Left ventricle myocardium inferior (tissue), 1 donor: ENCODE measurements at regions of chr6 and their contacts with region 1.

Region 1: DNA sequence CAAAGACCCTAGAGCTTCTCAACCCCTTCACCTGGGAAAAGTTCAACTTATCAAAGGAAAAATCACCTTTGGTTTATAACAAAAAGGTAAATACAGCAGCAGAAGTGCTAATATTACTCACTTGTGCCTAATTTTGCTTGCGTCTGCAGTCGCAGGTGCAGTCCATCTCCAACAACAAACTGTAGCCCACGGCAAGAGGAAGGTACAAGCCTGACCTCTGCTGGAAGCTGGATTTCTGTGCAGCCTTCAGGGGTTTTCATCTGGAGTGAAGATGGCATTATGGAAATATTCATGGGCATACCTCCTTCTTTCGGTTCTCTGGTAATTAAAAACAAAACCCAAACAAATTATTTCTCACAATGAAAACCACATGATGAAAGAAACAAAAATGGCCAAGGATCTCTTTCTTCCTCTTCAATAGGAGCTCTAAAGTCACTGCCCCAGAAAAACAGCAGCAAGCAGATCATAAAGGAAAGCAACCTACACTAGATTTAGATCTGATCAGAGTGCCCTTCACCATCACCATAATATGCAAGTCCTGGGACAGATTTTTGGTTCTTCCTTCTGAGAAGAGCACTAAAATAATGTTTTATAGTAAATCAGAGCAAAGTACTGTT is 7.8 kb downstream of the UBE3D start:
- DNase-seq: no peak
- H3K4me3 ChIP-seq: no peak overlapping the region
- H3K27ac ChIP-seq: no peak overlapping the region
- H3K4me1 ChIP-seq: peaks cover 4% of the 10 kb centered on the region
- H3K27me3 ChIP-seq: no peaks in the 10 kb centered on the region
- CTCF ChIP-seq: peak; percentile 73

Region 2: GRCh38 chr6:82251942-82252341 is 805.9 kb before region 1 on chr6:
- intact Hi-C with region 1: loop called (anchors 5 kb)
- DNase-seq: no peak
- H3K4me3 ChIP-seq: no peak overlapping the region
- H3K27ac ChIP-seq: no peak overlapping the region
- H3K4me1 ChIP-seq: peaks cover 16% of the 10 kb centered on the region
- H3K27me3 ChIP-seq: no peaks in the 10 kb centered on the region
- CTCF ChIP-seq: peak; percentile 60

Region 3: DNA sequence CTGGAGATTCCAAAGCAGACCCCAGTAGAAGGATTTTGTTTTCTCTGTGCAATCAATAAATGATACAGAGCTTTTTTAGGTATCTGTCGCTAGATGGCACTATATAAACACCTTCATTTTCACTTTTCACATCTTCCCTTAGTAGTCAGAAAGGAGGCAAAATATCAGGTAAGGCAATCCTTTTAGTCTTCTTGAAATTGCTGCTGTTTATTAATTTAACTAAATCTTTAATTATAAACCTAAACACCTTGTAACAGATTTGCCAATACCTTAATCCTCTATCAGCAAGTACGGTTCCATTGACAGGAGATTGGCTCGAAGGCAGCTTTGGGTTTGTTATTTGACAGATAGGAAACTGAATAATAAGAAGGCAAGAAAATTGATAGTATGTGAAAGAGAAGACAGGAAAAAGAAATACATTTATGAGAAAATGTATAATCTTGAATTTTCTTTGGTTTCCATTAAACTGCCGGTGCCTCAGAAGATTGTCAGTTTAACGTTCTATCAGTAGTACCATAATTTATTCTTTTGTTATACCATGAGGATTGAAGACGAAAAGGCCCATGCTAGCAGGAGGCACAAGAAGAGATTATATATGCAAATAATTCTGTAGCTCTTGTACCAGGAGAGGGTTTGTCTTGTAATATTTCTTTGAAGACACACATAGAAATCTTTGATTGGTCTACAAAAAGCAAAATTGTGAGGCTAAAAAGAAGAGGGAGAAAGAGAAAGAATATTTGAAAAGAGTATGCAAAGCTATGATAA is 786.8 kb before region 1 on chr6:
- intact Hi-C with region 1: loop called (anchors 5 kb)
- DNase-seq: no peak
- H3K4me3 ChIP-seq: no peak overlapping the region
- H3K27ac ChIP-seq: no peak overlapping the region
- H3K4me1 ChIP-seq: no peaks in the 10 kb centered on the region
- H3K27me3 ChIP-seq: peaks cover 5% of the 10 kb centered on the region
- CTCF ChIP-seq: peak; percentile 74

Region 4: DNA sequence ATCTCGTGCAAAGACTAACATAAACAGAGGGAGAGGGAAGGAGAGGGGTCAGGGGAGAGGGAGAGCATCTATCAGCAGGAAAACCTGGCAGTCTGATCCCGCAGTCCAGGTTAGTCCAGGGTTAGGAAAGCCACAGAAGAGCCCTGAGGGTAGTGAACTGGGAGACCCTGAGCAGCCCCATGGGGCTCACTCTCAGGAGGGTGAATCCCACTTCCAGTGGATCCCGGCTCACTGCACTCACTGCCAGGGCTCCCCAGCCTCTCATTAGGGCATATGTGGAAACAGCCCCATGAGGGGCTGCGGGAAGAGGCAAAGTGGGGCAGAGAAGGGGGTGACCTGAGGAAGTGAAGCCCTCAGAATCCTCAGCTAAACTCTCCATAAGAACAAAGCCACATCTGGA is 322.0 kb before region 1 on chr6:
- intact Hi-C with region 1: no loop called
- DNase-seq: no peak
- H3K4me3 ChIP-seq: no peak overlapping the region
- H3K27ac ChIP-seq: no peak overlapping the region
- H3K4me1 ChIP-seq: no peaks in the 10 kb centered on the region
- H3K27me3 ChIP-seq: peaks cover 5% of the 10 kb centered on the region
- CTCF ChIP-seq: no peak

Region 5: GRCh38 chr6:82906951-82907350 is 150.9 kb before region 1 on chr6:
- intact Hi-C with region 1: no loop called
- DNase-seq: no peak
- H3K4me3 ChIP-seq: no peak overlapping the region
- H3K27ac ChIP-seq: no peak overlapping the region
- H3K4me1 ChIP-seq: peaks cover 13% of the 10 kb centered on the region
- H3K27me3 ChIP-seq: no peaks in the 10 kb centered on the region
- CTCF ChIP-seq: no peak

Region 6: DNA sequence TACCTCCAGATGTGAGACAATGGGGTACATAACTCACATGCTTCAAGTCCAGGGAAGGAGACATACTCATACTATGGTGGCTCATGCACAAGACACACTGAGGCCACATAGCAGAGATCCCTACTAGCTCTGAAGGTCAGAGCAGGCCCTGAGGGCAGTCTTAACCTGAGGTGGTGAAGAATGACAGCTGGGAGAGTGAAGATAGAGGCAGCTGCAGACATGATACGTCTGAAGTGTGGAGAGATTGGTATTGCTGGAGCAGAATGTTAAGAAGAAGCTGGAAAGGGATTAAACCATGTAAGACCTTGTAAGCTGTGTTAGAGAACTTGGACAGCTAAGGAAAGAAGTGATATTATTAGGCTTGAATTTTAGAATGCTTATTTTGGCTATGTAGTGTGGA is 102.4 kb after region 1 on chr6:
- intact Hi-C with region 1: no loop called
- DNase-seq: no peak
- H3K4me3 ChIP-seq: no peak overlapping the region
- H3K27ac ChIP-seq: no peak overlapping the region
- H3K4me1 ChIP-seq: peaks cover 15% of the 10 kb centered on the region
- H3K27me3 ChIP-seq: no peaks in the 10 kb centered on the region
- CTCF ChIP-seq: no peak